ENCODE measurements at regions of chr12 and their contacts with region 1.

Region 1: GRCh38 chr12:53500776-53501614 is at the start of gene TARBP2:
- DNase-seq: peak; percentile 98 to 99 (median 99)
- H3K4me3 ChIP-seq: peak within 1 kb of the TSS; percentile 79 to 91
- H3K4me3 Mint-ChIP-seq: peak within 1 kb of the TSS; percentile 89 to 98 (median 92)
- H3K27ac ChIP-seq: peak within 1 kb of the TSS; percentile 98
- H3K27ac Mint-ChIP-seq: peak within 1 kb of the TSS; percentile 92 to 100 (median 99)
- H3K4me1 ChIP-seq: peaks cover 41% of the 10 kb centered on the region
- H3K4me1 Mint-ChIP-seq: peaks cover 17 to 63% (median 45%) of the 10 kb centered on the region in 4 donors
- H3K27me3 ChIP-seq: no peaks in the 10 kb centered on the region
- H3K27me3 Mint-ChIP-seq: no peaks in the 10 kb centered on the region
- total RNA-seq, gene TARBP2: 26.9 to 37.0 TPM

Region 2: GRCh38 chr12:53079226-53080117 is 421.5 kb before region 1 on chr12 and contains the start of gene SPRYD3:
- CTCF ChIA-PET with region 1: no interaction called
- POLR2A ChIA-PET with region 1: interaction called, 10 read pairs
- intact Hi-C with region 1: no loop called
- DNase-seq: peak; percentile 96 to 99 (median 97)
- H3K4me3 ChIP-seq: peak within 1 kb of the TSS; percentile 73
- H3K4me3 Mint-ChIP-seq: peak within 1 kb of the TSS; percentile 89 to 97 (median 94)
- H3K27ac ChIP-seq: peak within 1 kb of the TSS; percentile 83
- H3K27ac Mint-ChIP-seq: peak within 1 kb of the TSS; percentile 92 to 98 (median 95)
- H3K4me1 ChIP-seq: peaks cover 29% of the 10 kb centered on the region
- H3K4me1 Mint-ChIP-seq: peaks cover 23 to 61% (median 39%) of the 10 kb centered on the region in 4 donors
- H3K27me3 ChIP-seq: no peaks in the 10 kb centered on the region
- H3K27me3 Mint-ChIP-seq: no peaks in the 10 kb centered on the region
- total RNA-seq, gene SPRYD3: 54.3 to 59.3 TPM

Region 3: GRCh38 chr12:53255996-53256395 is 245.0 kb before region 1 on chr12:
- CTCF ChIA-PET with region 1: no interaction called
- POLR2A ChIA-PET with region 1: no interaction called
- intact Hi-C with region 1: no loop called
- DNase-seq: no peak
- H3K4me3 ChIP-seq: no peak overlapping the region
- H3K4me3 Mint-ChIP-seq: peak overlapping the region in 3 of 8 donors; percentile 34 to 68 (median 38)
- H3K27ac ChIP-seq: no peak overlapping the region
- H3K27ac Mint-ChIP-seq: peak overlapping the region in 6 of 7 donors; percentile 23 to 84 (median 68)
- H3K4me1 ChIP-seq: peaks cover 45% of the 10 kb centered on the region
- H3K4me1 Mint-ChIP-seq: peaks cover 21 to 56% (median 41%) of the 10 kb centered on the region in 4 donors
- H3K27me3 ChIP-seq: no peaks in the 10 kb centered on the region
- H3K27me3 Mint-ChIP-seq: no peaks in the 10 kb centered on the region

Region 4: DNA sequence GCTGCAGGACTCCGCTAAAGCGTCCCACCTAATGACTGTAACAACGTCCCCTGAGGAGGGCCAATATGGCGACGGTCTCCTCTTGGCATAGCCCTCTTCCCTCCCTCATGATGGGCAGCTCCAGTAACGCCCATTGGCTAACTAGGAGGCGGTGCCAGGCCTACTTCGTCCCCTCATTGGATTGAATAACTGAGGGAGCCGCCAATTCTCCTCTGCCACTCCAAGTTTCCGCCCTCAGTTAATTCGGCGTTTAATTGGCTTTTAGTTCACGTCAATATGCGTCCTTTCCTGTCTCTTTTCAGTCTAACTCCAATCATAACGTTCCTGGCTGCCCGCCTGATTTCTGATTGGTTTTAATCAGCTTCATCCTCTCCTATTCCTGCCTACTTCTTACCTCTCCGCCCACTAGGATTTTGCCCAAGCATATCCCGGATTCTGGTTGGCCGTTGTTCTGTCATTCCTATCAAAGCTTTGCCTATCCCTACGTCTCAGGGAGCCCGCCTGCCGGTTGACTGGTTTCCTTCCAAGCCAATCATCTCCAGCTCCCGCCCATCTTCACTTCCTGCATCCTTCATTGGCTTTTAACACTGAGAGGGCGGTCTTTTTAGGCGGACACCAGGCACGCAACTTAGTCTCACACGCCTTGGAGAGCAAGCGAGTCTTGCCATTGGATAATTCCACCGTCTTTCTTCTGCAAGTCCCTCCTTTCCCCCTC is 121.4 kb before region 1 on chr12:
- CTCF ChIA-PET with region 1: interaction called, 3 read pairs
- POLR2A ChIA-PET with region 1: interaction called, 49 read pairs
- intact Hi-C with region 1: loop called (anchors 1 kb)
- DNase-seq: peak; percentile 99 to 100 (median 100)
- H3K4me3 ChIP-seq: peak overlapping the region; percentile 57 to 86
- H3K4me3 Mint-ChIP-seq: no peak overlapping the region
- H3K27ac ChIP-seq: peak overlapping the region; percentile 70
- H3K27ac Mint-ChIP-seq: no peak overlapping the region
- H3K4me1 ChIP-seq: peaks cover 46% of the 10 kb centered on the region
- H3K4me1 Mint-ChIP-seq: peaks cover 28 to 37% (median 34%) of the 10 kb centered on the region in 4 donors
- H3K27me3 ChIP-seq: no peaks in the 10 kb centered on the region
- H3K27me3 Mint-ChIP-seq: no peaks in the 10 kb centered on the region

Region 5: GRCh38 chr12:53441040-53441833 is 59.8 kb before region 1 on chr12 and contains the start of gene PRR13:
- CTCF ChIA-PET with region 1: no interaction called
- POLR2A ChIA-PET with region 1: interaction called, 54 read pairs
- intact Hi-C with region 1: loop called (anchors 1 kb)
- DNase-seq: peak; percentile 95 to 100 (median 97)
- H3K4me3 ChIP-seq: peak within 1 kb of the TSS; percentile 75 to 91
- H3K4me3 Mint-ChIP-seq: peak within 1 kb of the TSS; percentile 95 to 99 (median 97)
- H3K27ac ChIP-seq: peak within 1 kb of the TSS; percentile 98
- H3K27ac Mint-ChIP-seq: peak within 1 kb of the TSS; percentile 91 to 99 (median 96)
- H3K4me1 ChIP-seq: peaks cover 40% of the 10 kb centered on the region
- H3K4me1 Mint-ChIP-seq: peaks cover 22 to 59% (median 40%) of the 10 kb centered on the region in 4 donors
- H3K27me3 ChIP-seq: no peaks in the 10 kb centered on the region
- H3K27me3 Mint-ChIP-seq: no peaks in the 10 kb centered on the region
- total RNA-seq, gene PRR13: 242 to 247 TPM

Region 6: GRCh38 chr12:53476769-53477209 is 24.2 kb before region 1 on chr12:
- CTCF ChIA-PET with region 1: interaction called, 6 read pairs
- POLR2A ChIA-PET with region 1: interaction called, 67 read pairs
- intact Hi-C with region 1: no loop called
- DNase-seq: peak in 1 of 5 donors; percentile 15
- H3K4me3 ChIP-seq: no peak overlapping the region
- H3K4me3 Mint-ChIP-seq: no peak overlapping the region
- H3K27ac ChIP-seq: no peak overlapping the region
- H3K27ac Mint-ChIP-seq: peak overlapping the region in 6 of 7 donors; percentile 2 to 82 (median 32)
- H3K4me1 ChIP-seq: peaks cover 50% of the 10 kb centered on the region
- H3K4me1 Mint-ChIP-seq: peaks cover 31 to 50% (median 33%) of the 10 kb centered on the region in 4 donors
- H3K27me3 ChIP-seq: no peaks in the 10 kb centered on the region
- H3K27me3 Mint-ChIP-seq: no peaks in the 10 kb centered on the region

Region 7: GRCh38 chr12:53625946-53626701 is 125.1 kb after region 1 on chr12 and contains the start of gene ATF7:
- CTCF ChIA-PET with region 1: no interaction called
- POLR2A ChIA-PET with region 1: interaction called, 7 read pairs
- intact Hi-C with region 1: loop called (anchors 1 kb)
- DNase-seq: peak; percentile 97 to 100 (median 98)
- H3K4me3 ChIP-seq: peak within 1 kb of the TSS; percentile 84 to 96
- H3K4me3 Mint-ChIP-seq: peak within 1 kb of the TSS; percentile 98 to 99 (median 98)
- H3K27ac ChIP-seq: peak within 1 kb of the TSS; percentile 83
- H3K27ac Mint-ChIP-seq: peak within 1 kb of the TSS; percentile 89 to 99 (median 98)
- H3K4me1 ChIP-seq: peaks cover 37% of the 10 kb centered on the region
- H3K4me1 Mint-ChIP-seq: peaks cover 35 to 57% (median 46%) of the 10 kb centered on the region in 4 donors
- H3K27me3 ChIP-seq: no peaks in the 10 kb centered on the region
- H3K27me3 Mint-ChIP-seq: no peaks in the 10 kb centered on the region
- total RNA-seq, gene ATF7: 26.8 to 35.8 TPM

Measured in CD4-positive, alpha-beta memory T cell (primary cell).